Mammary epithelial cell (primary cell): ENCODE measurements at regions of chr4 and their contacts with region 1.

Region 1: DNA sequence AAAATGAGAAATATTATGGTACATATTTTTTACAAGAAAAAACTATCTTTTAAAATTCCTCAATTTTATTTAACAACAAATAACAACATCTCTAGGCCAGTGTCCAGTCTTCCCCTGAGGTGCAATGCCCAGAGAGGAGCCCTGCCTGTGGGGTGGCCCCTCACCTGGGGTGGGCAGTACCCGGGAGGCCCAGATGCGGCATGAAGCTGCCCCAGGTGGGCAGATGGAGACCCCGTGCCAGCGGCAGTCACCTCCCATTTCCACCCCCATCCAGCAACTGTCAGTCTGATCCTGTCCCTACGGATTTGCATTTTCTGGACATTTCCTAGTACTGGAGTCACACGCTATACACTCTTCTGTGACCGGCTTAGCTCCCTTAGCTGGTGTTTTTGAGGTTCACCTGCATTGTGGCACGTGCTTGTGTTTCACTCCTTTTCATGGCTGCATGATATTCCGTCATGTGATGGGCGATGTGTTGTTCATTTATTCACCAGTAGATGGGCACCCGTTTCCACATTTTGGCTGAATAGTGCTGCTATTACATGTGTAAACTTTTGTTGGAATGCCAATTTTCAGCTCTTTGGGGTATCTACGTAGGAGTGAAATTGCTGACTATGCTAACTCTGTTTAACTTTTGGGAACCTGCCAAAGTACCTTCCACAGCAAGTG is 11.9 kb upstream of the MAEA start:
- DNase-seq: no peak
- H3K4me3 ChIP-seq: no peak overlapping the region
- H3K27ac ChIP-seq: no peak overlapping the region
- H3K4me1 ChIP-seq: no peaks in the 10 kb centered on the region
- H3K27me3 ChIP-seq: no peaks in the 10 kb centered on the region
- CTCF ChIP-seq: peak; percentile 16 to 22

Region 2: DNA sequence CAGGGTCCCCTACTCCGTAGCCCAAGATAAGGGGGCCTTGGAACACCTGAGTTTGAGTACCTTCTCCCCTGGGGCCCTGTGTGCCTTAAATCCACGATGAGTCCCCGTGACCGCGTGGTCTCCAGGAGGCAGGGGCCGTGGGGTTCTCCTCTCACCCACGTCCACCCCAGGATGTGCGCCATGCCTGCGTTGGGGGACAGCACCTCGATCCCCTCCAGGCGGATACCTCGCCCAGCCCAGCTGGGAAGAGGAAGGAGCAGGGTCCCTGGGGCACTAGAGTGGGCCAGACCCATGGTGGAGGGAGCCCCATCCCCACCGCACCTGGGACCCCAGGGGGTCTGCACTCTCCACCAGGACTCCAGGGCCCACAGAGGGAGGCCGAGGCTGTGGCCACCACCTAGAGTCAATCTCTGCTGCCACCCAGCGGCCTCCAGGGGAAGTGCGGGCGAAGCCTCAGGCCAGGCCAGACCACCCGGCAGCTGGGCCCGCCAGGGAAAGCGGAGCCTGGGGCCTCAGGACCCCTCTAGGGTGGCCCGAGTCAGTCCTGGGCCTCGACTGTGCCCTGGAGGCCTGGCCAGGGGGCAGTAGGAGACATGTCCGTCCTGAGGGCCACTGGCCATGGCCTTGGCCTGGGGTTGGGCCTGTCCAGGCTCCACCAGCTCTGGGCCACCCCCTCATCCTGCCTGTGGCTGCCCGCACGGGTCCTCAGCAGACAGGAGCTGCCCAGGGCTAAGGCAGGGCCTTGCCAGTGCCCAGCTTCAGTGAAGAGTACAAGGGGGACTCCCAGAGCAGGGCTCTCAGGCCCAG is 351.3 kb after region 1 on chr4:
- CTCF ChIA-PET with region 1: no interaction called
- dilution Hi-C with region 1: no loop called
- in situ Hi-C with region 1: no loop called
- intact Hi-C with region 1: loop called (anchors 10 kb)
- DNase-seq: peak; percentile 17
- H3K4me3 ChIP-seq: no peak overlapping the region
- H3K27ac ChIP-seq: no peak overlapping the region
- H3K4me1 ChIP-seq: no peaks in the 10 kb centered on the region
- H3K27me3 ChIP-seq: no peaks in the 10 kb centered on the region
- CTCF ChIP-seq: peak; percentile 89 to 97